ENCODE measurements at regions of chr3 and their contacts with region 1.

Region 1: DNA sequence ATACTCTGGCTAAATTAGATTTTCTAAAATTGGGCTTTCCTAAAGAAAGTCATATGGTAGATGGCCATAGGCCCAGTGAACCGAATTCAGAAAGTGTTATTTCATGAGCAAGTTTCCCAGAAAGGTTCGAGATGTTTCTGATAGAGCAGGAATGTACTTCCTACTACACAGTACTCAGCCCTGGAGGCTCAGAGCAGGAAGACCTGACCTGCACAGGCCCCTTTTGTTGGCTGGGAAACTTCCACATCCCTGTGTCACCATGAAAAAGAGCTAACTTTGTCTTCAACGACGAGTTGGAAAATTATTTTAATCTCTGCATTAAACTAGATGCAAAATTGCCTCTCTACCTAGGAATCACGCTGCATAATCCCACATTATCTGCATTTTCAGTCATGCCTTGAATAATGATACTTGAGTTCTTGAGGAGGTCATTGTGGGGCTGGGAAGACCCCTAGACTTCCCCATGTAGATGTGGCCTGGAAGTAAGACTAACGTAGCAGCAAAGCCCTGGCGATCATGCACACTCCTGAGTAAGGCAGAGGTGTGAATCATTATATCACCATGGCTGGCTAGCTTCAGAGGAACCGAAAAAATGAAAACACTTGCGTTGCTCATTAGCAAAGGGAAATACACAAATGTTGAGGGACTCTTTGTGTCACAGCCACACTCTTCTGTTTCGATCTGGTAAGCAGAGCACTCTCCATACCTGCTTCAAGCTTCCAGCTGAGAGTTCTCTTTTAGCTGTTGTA is 47.1 kb downstream of the CMTM7 start:
- DNase-seq: no peak
- H3K4me3 Mint-ChIP-seq: no peak overlapping the region
- H3K27ac Mint-ChIP-seq: peak overlapping the region; percentile 88
- H3K4me1 Mint-ChIP-seq: peaks cover 55% of the 10 kb centered on the region
- H3K27me3 Mint-ChIP-seq: no peaks in the 10 kb centered on the region

Region 2: DNA sequence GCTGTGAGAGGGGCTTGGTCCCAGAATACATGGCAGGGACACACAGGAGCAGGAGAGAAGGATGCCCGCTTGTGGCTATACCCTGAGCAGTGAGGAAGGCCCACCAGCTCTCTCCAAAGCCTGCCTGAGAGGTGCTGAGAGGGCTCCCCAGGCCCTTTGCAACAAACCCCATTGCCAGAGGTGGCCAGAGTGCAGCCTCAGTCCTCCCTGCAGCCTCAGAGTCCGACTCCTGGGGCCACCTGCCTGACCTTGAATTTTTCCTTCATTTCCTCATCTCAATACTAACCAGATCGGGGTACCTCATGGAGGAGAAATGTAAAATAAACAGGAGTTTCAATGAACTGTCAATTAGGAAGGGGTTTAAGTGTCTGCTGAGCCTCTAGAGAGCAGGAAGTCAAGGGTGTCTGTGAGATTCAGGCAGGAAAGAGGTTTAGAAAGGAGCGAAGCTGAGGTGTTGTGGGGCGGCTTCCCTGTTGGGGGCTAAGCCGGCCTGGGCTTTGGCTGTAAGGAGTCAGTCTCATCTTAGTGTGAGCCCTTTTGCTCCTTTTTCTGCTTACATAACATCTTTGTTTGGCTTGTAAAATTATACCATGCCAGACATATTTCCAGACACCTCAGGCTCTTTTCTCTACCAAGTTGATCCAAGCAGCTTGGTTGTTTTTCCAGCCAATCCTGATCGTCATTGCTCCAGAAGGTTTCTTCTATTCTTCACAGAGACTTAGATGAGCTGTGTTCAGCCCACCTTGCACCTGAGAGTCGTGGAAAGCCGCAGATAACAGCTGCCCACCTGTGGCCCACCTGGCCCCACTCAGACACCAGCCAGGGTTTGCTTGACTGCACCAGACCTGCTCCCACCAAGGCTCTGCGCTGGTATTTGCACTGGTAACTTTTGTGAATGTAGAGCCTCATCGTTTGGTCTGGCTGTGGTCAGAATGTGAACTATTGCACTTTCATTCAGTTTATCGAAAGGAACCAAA is 10.4 kb before region 1 on chr3:
- intact Hi-C with region 1: loop called (anchors 1 kb)
- DNase-seq: no peak
- H3K4me3 Mint-ChIP-seq: peak overlapping the region; percentile 35
- H3K27ac Mint-ChIP-seq: peak overlapping the region; percentile 82
- H3K4me1 Mint-ChIP-seq: peaks cover 75% of the 10 kb centered on the region
- H3K27me3 Mint-ChIP-seq: no peaks in the 10 kb centered on the region

Measured in activated T-helper 2 cell treated with anti-CD3 and anti-CD28 coated beads, Interferon-gamma antibody, Interleukin-2, Interleukin-4, amounts not matched to agents 10 μg/mL and 5 μg/mL and 100 μg/mL, durations not matched to agents 14 hours and 24 hours and 36 hours (primary cell).